ENCODE measurements at regions of chr2 and their contacts with region 1.

Region 1: DNA sequence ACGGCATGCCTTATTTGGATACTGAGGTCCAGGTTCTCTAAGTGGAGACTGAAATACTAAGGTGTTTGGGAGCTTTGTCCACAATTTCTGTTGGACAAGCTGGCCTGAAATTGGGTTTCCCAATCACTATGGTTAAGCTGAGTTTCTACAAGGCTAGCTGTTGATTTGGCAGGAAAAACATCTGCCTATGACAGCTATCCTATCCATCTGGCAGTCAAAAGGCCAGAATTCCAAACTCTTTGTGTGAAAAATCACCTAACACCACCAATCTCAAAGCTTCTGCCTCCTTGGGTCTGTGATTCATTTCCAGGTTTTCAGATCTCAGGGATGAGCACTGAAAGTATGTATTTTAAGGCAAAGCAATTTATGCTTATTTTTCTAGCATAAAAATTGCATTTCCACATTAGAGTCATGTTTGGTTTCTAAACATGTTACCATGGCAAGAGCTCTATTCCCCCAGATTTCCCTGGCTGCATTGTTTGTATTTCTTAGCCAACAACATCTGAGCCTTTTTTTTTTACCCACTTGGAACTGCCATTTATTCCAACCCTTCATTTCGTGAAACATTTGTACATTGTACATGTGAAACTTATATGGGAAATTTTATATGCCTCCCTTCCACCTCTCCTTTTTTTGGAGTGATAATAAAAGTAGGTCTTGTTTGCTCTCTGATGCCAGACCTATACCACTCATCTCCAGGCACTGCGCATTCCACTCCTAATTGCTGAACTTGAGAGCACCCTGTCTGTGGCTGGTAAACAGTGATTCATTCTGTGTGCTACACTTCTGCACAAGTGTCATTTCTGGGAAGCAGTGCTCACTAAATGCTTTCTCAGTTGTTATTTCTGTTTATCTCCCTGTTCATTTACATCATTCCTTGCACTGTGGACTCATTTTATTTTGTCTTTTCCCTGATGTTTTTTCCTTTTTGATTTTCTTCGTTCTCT is 15.9 kb upstream of the CCDC85A start:
- DNase-seq: no peak
- H3K4me3 ChIP-seq: no peak overlapping the region
- H3K4me3 Mint-ChIP-seq: no peak overlapping the region
- H3K27ac ChIP-seq: no peak overlapping the region
- H3K27ac Mint-ChIP-seq: no peak overlapping the region
- H3K4me1 ChIP-seq: no peaks in the 10 kb centered on the region
- H3K4me1 Mint-ChIP-seq: no peaks in the 10 kb centered on the region
- H3K27me3 ChIP-seq: no peaks in the 10 kb centered on the region
- H3K27me3 Mint-ChIP-seq: peaks cover 1 to 2% of the 10 kb centered on the region in 2 donors

Region 2: GRCh38 chr2:56133931-56134629 is 33.8 kb before region 1 on chr2:
- CTCF ChIA-PET with region 1: no interaction called
- POLR2A ChIA-PET with region 1: no interaction called
- intact Hi-C with region 1: no loop called
- DNase-seq: no peak
- H3K4me3 ChIP-seq: no peak overlapping the region
- H3K4me3 Mint-ChIP-seq: no peak overlapping the region
- H3K27ac ChIP-seq: no peak overlapping the region
- H3K27ac Mint-ChIP-seq: no peak overlapping the region
- H3K4me1 ChIP-seq: no peaks in the 10 kb centered on the region
- H3K4me1 Mint-ChIP-seq: peaks cover 0 to 2% (median 0%) of the 10 kb centered on the region in 4 donors
- H3K27me3 ChIP-seq: no peaks in the 10 kb centered on the region
- H3K27me3 Mint-ChIP-seq: peaks cover 0 to 3% of the 10 kb centered on the region in 2 donors

Region 3: GRCh38 chr2:56183643-56184499 is 16.0 kb after region 1 on chr2 and contains the start of gene CCDC85A:
- CTCF ChIA-PET with region 1: interaction called, 10 read pairs
- POLR2A ChIA-PET with region 1: no interaction called
- intact Hi-C with region 1: no loop called
- DNase-seq: peak; percentile 18 to 37 (median 24)
- H3K4me3 ChIP-seq: no peak within 1 kb of the TSS
- H3K4me3 Mint-ChIP-seq: peak within 1 kb of the TSS in 6 of 8 donors; percentile 8 to 59 (median 46)
- H3K27ac ChIP-seq: no peak within 1 kb of the TSS
- H3K27ac Mint-ChIP-seq: no peak within 1 kb of the TSS
- H3K4me1 ChIP-seq: no peaks in the 10 kb centered on the region
- H3K4me1 Mint-ChIP-seq: peaks cover 3 to 19% (median 10%) of the 10 kb centered on the region in 4 donors
- H3K27me3 ChIP-seq: peaks cover 6% of the 10 kb centered on the region
- H3K27me3 Mint-ChIP-seq: peaks cover 41 to 45% of the 10 kb centered on the region in 2 donors
- total RNA-seq, gene CCDC85A: not detected

Region 4: DNA sequence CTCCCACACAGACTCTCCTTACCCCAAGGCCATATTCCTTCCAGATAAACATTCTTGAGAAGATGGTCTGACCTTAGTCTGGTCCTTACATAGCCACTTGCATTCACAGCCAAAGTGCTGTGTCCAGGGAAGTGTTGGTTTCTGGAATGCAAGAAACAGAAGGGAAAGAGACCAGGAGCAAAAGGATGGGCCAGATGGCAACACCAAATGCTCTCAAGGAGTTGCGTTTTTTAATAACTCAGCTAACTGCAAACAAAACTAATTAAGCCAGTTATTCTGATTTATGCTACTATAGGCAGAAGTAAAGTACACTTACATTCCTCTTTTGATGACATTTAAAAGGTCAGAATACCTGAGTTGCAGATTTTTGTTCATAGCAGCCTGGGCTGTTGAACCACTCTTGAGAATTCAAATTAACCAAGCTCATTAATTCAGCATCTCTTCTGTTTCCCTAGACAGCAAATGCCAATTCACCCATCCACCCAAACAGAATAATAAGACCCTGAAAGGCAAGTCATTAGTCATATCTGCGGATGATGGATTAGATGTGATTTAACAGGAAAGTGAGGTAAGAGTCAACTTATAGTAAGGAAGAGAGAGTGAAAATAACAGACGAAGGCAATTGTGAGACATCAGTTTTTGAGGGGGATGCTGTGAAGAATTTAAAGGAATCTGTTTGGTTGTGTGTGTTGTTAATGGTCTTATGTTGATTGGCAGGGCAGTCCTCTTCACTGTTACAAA is 34.7 kb after region 1 on chr2:
- CTCF ChIA-PET with region 1: no interaction called
- POLR2A ChIA-PET with region 1: no interaction called
- intact Hi-C with region 1: no loop called
- DNase-seq: no peak
- H3K4me3 ChIP-seq: no peak overlapping the region
- H3K4me3 Mint-ChIP-seq: no peak overlapping the region
- H3K27ac ChIP-seq: no peak overlapping the region
- H3K27ac Mint-ChIP-seq: no peak overlapping the region
- H3K4me1 ChIP-seq: no peaks in the 10 kb centered on the region
- H3K4me1 Mint-ChIP-seq: no peaks in the 10 kb centered on the region
- H3K27me3 ChIP-seq: no peaks in the 10 kb centered on the region
- H3K27me3 Mint-ChIP-seq: no peaks in the 10 kb centered on the region

Region 5: DNA sequence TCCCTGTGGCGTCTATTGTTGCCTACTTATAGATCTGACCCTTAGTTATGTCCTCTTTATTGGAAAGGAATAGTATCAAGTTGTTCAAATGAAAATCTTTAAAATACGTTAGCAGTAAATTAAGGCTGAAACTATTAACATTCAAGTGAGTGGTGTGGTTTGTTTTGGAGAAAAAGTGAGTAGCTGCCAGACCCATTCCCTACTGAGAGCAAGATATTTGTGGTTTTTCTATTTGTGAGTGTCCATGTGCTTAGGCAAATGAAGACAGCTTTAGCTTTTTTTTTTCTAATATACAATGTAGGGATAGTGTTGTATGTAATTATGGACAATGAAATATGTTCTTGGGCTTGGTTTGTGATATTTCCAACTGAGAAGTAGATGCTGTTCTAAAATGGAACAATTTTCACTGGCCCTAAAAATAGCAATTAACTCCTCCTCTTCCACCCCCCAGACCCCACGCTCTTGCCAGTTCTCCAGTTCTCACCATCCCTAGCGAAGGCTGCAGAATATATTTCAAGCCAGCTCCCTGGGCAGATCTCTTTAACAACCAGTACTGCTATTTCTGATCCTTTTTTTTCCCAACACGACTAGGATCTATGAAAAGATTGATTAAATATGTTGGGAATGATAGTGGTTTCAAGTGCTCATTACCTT is 99.0 kb after region 1 on chr2:
- CTCF ChIA-PET with region 1: no interaction called
- POLR2A ChIA-PET with region 1: no interaction called
- intact Hi-C with region 1: no loop called
- DNase-seq: no peak
- H3K4me3 ChIP-seq: no peak overlapping the region
- H3K4me3 Mint-ChIP-seq: no peak overlapping the region
- H3K27ac ChIP-seq: no peak overlapping the region
- H3K27ac Mint-ChIP-seq: peak overlapping the region in 1 of 7 donors; percentile 22
- H3K4me1 ChIP-seq: no peaks in the 10 kb centered on the region
- H3K4me1 Mint-ChIP-seq: no peaks in the 10 kb centered on the region
- H3K27me3 ChIP-seq: no peaks in the 10 kb centered on the region
- H3K27me3 Mint-ChIP-seq: no peaks in the 10 kb centered on the region

Measured in CD4-positive, alpha-beta memory T cell (primary cell).